AG04450 (cell line): ENCODE measurements at regions of chr10 and their contacts with region 1.

Region 1: DNA sequence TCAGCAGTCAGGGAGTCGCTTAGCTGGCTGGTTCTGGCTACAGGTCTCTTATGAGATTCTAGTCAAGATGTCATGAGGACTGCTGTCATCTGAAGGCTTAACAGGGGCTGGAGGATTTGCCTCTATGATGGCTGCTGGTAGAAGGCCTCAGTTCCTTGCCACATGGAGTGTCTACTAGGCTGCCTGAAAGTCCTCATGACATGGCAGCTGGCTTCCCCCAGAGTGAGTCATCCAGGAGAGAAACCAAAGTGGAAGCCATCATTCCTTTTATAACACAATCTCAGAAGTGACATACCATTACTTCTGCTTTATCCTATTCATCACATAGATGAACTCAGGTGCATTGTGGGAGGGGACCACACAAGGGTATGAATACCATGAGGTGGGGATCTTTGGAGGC is 75.1 kb downstream of the EXOC6 start:
- DNase-seq: no peak
- H3K4me3 ChIP-seq: no peak overlapping the region
- H3K27ac ChIP-seq: no peak overlapping the region
- H3K27me3 ChIP-seq: no peaks in the 10 kb centered on the region
- CTCF ChIP-seq: no peak

Region 2: DNA sequence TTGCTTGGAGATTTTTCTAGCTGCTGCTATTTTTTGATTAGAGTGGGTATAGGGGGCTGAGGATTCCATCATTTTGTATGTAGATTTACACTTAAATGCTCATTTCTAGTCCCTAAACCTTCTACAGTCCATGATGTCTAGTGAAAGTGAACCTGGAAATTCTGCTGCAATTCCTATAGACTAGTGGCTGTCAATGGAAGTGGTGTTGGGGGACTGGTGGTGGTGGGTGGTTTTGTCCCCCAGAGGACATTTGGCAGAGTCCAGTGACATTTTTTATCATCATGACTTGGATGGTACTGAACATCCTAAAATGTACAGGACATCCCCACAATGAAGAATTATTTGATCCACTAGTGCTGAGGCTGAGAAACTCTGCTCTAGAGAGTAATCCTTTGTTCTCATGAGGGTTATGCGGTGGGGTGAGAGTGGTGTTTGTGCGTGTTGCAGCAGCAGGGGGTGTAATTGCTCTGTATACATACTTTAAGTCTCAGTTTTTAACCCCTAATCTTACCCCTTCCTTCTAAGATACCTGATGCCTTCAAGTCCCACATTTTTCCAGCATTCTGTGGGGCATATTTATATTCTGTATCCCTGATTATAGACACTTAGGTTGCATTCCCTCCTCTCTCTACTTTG is 295.5 kb before region 1 on chr10:
- CTCF ChIA-PET with region 1: interaction called, 10 read pairs
- POLR2A ChIA-PET with region 1: no interaction called
- DNase-seq: no peak
- H3K4me3 ChIP-seq: no peak overlapping the region
- H3K27ac ChIP-seq: no peak overlapping the region
- H3K27me3 ChIP-seq: no peaks in the 10 kb centered on the region
- CTCF ChIP-seq: no peak

Region 3: GRCh38 chr10:92880233-92880861 is 43.1 kb before region 1 on chr10:
- CTCF ChIA-PET with region 1: no interaction called
- POLR2A ChIA-PET with region 1: no interaction called
- DNase-seq: peak; percentile 24
- H3K4me3 ChIP-seq: no peak overlapping the region
- H3K27ac ChIP-seq: no peak overlapping the region
- H3K27me3 ChIP-seq: no peaks in the 10 kb centered on the region
- CTCF ChIP-seq: peak; percentile 53